ENCODE measurements at regions of chr2 and their contacts with region 1.

Region 1: DNA sequence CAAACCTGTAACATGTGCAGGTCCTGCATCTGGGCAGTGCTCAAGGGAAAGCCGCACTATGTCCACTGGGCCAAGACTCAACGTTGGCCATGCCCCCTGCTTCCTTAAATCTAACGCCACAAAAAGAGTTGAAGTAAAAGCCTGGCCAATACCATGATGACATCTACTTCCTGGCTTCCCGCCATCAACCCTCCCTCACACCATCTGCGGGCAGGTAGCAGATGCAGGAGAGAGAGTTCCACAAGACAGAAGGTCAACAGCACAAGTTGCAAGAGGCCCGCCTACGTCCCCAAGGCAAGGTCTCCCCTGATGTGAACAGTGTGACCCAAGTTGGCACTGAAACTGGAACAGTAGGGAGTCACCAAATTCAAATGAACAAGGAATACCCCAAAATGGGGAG is 48.4 kb downstream of the ABCG8 start:
- DNase-seq: no peak
- H3K4me3 ChIP-seq: no peak overlapping the region
- H3K27ac ChIP-seq: no peak overlapping the region
- H3K4me1 ChIP-seq: peaks cover 5% of the 10 kb centered on the region
- H3K27me3 ChIP-seq: no peaks in the 10 kb centered on the region
- CTCF ChIP-seq: no peak
- POLR2A ChIP-seq: no peak

Region 2: GRCh38 chr2:43611987-43612894 is 274.9 kb before region 1 on chr2:
- intact Hi-C with region 1: loop called (anchors 10 kb)
- DNase-seq: peak; percentile 64
- H3K4me3 ChIP-seq: no peak overlapping the region
- H3K27ac ChIP-seq: no peak overlapping the region
- H3K4me1 ChIP-seq: no peaks in the 10 kb centered on the region
- H3K27me3 ChIP-seq: no peaks in the 10 kb centered on the region
- CTCF ChIP-seq: peak; percentile 50 to 77 (median 62)
- POLR2A ChIP-seq: no peak